HEK293 (cell line): ENCODE measurements at regions of chr1 and their contacts with region 1.

Region 1: GRCh38 chr1:31745096-31745945 is 18.8 kb downstream of the ADGRB2 start:
- H3K4me3 ChIP-seq: no peak overlapping the region
- H3K27ac ChIP-seq: no peak overlapping the region
- H3K4me1 ChIP-seq: no peaks in the 10 kb centered on the region; the same call in 1 of the 2 replicates
- CTCF ChIP-seq: peak; percentile 60

Region 2: GRCh38 chr1:31485166-31485565 is 260.2 kb before region 1 on chr1:
- CTCF ChIA-PET with region 1: no interaction called
- POLR2A ChIA-PET with region 1: no interaction called
- H3K4me3 ChIP-seq: no peak overlapping the region
- H3K27ac ChIP-seq: no peak overlapping the region
- H3K4me1 ChIP-seq: no peaks in the 10 kb centered on the region
- CTCF ChIP-seq: no peak

Region 3: DNA sequence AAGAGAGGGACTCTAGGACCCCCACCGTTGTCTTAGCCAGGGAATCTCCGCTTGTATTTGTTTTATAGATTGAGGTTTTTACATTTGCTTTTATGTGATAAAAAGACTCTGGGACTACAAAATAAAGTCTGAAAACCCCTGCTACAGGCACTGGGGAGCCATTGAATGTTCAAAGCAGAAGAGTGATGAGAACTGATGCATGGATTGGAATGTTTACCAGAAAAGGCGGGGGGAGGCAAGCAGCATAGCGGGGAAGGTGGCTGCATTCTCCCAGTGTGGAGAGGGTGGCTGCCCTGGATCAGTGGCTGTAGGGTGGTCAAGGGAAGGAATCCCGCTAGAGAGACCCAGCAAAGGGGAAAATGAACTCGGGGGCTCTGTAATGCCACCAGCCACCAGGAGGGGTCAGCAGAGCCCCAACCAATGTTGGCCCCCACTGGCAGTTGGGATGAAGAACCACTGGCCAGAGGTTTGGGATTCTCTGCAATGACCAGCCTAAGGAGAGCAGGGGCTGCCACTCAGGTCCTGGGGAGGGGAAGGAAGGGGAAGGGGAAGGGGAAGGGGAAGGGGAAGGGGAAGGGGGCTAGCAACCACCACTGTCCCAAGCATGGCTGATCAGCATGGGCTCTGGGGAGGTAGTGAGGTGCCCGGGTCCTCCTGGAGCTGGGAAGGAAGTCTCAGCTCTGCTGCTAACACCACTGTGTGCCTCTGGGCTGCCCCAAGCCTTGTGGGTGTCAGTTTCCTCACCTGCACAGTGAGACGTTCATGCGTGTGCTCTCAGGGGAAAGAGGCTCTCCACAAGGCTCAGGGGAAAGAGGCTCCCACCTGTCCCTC is 81.5 kb before region 1 on chr1:
- CTCF ChIA-PET with region 1: interaction called, 71 read pairs
- POLR2A ChIA-PET with region 1: interaction called, 3 read pairs
- H3K4me3 ChIP-seq: no peak overlapping the region
- H3K27ac ChIP-seq: no peak overlapping the region
- H3K4me1 ChIP-seq: no peaks in the 10 kb centered on the region
- CTCF ChIP-seq: peak; percentile 82

Region 4: GRCh38 chr1:31723828-31724359 is 21.4 kb before region 1 on chr1:
- CTCF ChIA-PET with region 1: interaction called, 10 read pairs
- POLR2A ChIA-PET with region 1: no interaction called
- H3K4me3 ChIP-seq: no peak overlapping the region
- H3K27ac ChIP-seq: no peak overlapping the region
- H3K4me1 ChIP-seq: no peaks in the 10 kb centered on the region
- CTCF ChIP-seq: no peak

Region 5: GRCh38 chr1:31733389-31734219 is 11.7 kb before region 1 on chr1:
- CTCF ChIA-PET with region 1: interaction called, 13 read pairs
- POLR2A ChIA-PET with region 1: no interaction called
- H3K4me3 ChIP-seq: no peak overlapping the region
- H3K27ac ChIP-seq: no peak overlapping the region
- H3K4me1 ChIP-seq: no peaks in the 10 kb centered on the region
- CTCF ChIP-seq: no peak

Region 6: DNA sequence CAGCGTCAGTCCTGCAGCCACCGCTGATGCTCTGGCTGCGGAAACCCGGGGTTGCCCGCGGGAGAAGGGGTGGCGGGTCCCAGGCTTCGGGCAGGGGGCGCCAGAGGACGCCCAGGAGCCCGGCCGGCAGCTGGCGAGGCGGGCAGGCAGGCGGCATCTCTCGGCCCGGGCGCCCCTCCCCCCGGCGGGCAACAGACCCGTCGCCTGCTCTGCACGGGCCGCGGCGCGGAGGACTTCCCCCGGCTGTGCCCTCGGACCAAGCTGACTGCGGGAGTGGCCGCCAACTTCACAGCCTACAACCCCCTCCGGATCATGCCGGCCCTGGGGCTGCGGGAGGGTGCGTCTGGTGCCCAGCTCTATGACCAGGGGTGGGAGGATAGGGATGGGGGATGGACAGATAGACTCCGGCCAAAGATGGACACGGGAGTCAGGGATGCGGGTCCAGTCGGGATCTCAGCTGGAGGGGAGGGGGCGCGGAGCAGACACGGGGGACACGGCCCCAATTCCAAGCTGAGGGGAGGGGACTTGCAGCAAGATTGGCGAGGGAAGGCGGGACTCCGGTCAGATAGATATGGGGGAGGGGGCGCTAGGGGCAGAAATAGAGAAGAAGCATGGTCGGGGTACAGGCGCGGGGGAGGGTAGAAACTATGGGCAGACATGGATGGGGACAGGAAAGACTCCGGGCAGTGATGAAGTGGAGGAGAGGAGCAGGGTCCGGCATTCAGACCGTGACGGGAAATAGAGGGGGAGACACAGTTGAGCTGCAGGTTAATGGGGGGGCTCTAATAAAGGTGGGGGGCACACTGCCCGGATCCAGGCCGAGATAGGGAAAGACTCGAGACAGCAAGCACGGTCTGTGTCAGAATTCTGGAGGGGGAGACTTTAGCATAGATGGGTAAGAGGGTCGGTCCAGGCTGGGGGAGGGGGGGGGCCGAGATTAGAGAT is 17.7 kb after region 1 on chr1:
- CTCF ChIA-PET with region 1: interaction called, 16 read pairs
- POLR2A ChIA-PET with region 1: interaction called, 7 read pairs
- H3K4me3 ChIP-seq: peak overlapping the region; percentile 50
- H3K27ac ChIP-seq: peak overlapping the region; percentile 39; the same call in 1 of the 2 replicates
- H3K4me1 ChIP-seq: no peaks in the 10 kb centered on the region; the same call in 1 of the 2 replicates
- CTCF ChIP-seq: peak; percentile 68